ENCODE measurements at regions of chr11 and their contacts with region 1.

Region 1: GRCh38 chr11:9259981-9260837 is 4.9 kb downstream of the DENND5A start:
- DNase-seq: no peak
- ATAC-seq: 0 out of 3 replicates have a peak, but pooled peaks have one; percentile 8
- H3K4me3 ChIP-seq: peak overlapping the region; percentile 50
- H3K27ac ChIP-seq: no peak overlapping the region
- H3K4me1 ChIP-seq: peaks cover 4% of the 10 kb centered on the region; the same call in 1 of the 2 replicates
- H3K27me3 ChIP-seq: no peaks in the 10 kb centered on the region
- CTCF ChIP-seq: peak; percentile 23 to 30 (median 24); a peak in 4 of 6 replicates
- EP300 ChIP-seq: no peak
- POLR2A ChIP-seq: no peak
- RAD21 ChIP-seq: peak; percentile 59

Region 2: GRCh38 chr11:9170450-9170849 is 89.8 kb before region 1 on chr11:
- CTCF ChIA-PET with region 1: interaction called, 12 read pairs
- POLR2A ChIA-PET with region 1: no interaction called
- RAD21 ChIA-PET with region 1: interaction called, 7 read pairs
- SMC1A ChIA-PET with region 1: interaction called, 20 read pairs
- in situ Hi-C with region 1: no loop called
- intact Hi-C with region 1: loop called (anchors 5 kb)
- DNase-seq: no peak
- ATAC-seq: no peak
- H3K4me3 ChIP-seq: no peak overlapping the region
- H3K27ac ChIP-seq: no peak overlapping the region
- H3K4me1 ChIP-seq: no peaks in the 10 kb centered on the region
- H3K27me3 ChIP-seq: no peaks in the 10 kb centered on the region
- CTCF ChIP-seq: no peak
- EP300 ChIP-seq: no peak
- POLR2A ChIP-seq: no peak
- RAD21 ChIP-seq: no peak

Region 3: DNA sequence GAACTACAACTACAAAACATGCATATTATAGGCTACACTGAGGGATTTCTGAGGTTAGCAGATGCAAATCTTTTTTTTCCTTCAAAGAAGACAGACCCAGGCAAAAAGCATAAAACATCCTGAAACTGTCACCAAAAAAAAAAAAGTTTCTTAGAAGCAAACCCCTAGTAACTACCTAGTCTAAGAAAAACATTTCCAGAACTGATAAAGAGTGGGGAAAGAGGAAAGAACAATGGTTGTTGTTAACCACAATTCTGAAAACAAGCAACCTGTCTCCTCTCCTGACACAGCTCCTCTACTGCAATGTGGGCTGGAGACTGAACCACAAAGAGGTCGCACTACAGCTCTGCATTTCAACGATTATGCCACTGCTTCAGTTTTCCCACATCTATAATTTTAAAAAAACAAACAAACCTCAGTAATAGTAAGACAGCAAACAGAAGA is 10.0 kb before region 1 on chr11:
- CTCF ChIA-PET with region 1: interaction called, 8 read pairs
- POLR2A ChIA-PET with region 1: interaction called, 7 read pairs
- RAD21 ChIA-PET with region 1: interaction called, 5 read pairs
- SMC1A ChIA-PET with region 1: interaction called, 17 read pairs
- in situ Hi-C with region 1: no loop called
- intact Hi-C with region 1: no loop called
- DNase-seq: peak; percentile 77
- ATAC-seq: peak; percentile 83
- H3K4me3 ChIP-seq: no peak overlapping the region
- H3K27ac ChIP-seq: peak overlapping the region; percentile 35; the same call in 1 of the 2 replicates
- H3K4me1 ChIP-seq: peaks cover 30% of the 10 kb centered on the region
- H3K27me3 ChIP-seq: no peaks in the 10 kb centered on the region
- CTCF ChIP-seq: no peak
- EP300 ChIP-seq: peak; percentile 42 to 58; a peak in 2 of 4 replicates
- POLR2A ChIP-seq: no peak
- RAD21 ChIP-seq: no peak